Activated CD4-positive, alpha-beta T cell treated with anti-CD3 and anti-CD28 coated beads for 36 hours (primary cell): ENCODE measurements at regions of chrX and their contacts with region 1.

Region 1: DNA sequence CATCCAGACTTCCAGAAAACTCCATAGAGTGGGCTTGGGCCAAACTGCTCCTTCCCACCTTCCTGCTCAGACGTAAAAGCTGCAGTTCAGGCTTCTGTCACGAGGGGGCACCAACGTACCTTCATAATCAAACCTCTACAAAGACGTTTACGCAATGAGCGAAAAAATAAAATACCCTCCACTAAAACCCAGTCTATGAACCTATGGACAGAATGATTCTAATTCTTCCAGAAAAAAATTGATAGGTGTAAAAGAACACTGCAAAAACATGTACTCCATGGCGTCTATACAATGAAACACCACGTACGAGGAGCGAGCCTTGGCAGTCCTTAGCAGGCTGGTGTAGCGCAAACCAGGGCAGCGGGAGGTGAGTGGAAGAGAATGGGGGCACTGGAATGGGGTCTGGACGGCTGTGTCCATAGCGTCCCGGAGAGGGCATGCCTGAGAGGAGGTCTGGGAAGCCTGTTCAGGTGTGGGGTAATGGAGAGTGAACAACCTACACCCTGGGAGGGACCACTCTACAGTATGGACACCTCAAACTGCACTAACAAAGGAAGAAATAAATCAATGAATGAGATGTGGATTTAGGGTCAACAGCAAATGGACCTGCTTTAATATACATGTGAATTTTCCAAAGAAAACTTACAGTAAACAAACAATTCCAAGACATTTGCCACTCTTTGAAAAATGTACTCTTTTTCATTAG is 14.4 kb upstream of the RAB40A start:
- DNase-seq: peak; percentile 77
- ATAC-seq: peak; percentile 64
- H3K4me3 Mint-ChIP-seq: peak overlapping the region; percentile 30
- H3K27ac Mint-ChIP-seq: no peak overlapping the region
- H3K4me1 Mint-ChIP-seq: peaks cover 2% of the 10 kb centered on the region
- H3K27me3 Mint-ChIP-seq: no peaks in the 10 kb centered on the region

Region 2: DNA sequence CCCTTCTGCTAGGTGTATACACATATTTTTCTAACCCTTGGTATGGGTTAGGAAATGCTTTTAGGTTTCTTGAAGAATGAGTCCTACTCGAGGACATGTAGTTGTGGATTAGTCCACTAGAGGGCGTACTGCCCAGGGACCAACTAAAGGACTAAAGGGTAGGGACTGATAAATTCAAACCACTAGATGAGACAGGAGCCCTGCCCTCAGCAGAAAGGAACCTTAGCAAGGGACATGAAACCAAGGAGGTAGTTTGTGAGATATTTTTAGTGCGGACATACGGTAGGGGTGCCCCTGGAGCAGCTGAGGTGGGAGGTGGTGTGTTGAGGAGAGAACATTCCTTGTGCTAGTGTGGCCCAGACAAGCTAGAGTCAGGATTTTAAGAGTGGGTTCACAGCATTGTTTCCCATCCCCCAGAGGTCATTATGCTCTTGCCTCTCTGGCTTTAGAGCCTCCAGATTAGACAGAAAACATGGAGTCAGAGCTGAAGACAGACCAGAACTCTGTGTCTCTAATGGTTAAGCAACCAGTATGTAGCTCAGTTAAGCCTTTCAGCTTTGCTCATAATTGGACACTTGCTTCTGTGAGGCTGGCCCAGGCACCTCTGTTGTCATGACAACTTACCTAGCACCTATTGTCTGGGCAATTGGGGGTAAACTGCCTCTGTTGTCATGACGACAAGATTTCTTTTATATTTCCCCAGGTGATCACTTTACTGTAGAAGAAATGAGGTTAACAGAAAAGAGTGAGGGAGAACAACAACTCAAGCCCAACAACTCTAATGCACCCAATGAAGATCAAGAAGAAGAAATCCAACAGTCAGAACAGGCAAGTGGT is 178.1 kb after region 1 on chrX:
- CTCF ChIA-PET with region 1: interaction called, 5 read pairs
- POLR2A ChIA-PET with region 1: no interaction called
- intact Hi-C with region 1: loop called in 1 of 2 experiments (anchors 2 kb)
- DNase-seq: peak; percentile 66
- ATAC-seq: peak; percentile 44
- H3K4me3 Mint-ChIP-seq: no peak overlapping the region
- H3K27ac Mint-ChIP-seq: no peak overlapping the region
- H3K4me1 Mint-ChIP-seq: no peaks in the 10 kb centered on the region
- H3K27me3 Mint-ChIP-seq: no peaks in the 10 kb centered on the region

Region 3: DNA sequence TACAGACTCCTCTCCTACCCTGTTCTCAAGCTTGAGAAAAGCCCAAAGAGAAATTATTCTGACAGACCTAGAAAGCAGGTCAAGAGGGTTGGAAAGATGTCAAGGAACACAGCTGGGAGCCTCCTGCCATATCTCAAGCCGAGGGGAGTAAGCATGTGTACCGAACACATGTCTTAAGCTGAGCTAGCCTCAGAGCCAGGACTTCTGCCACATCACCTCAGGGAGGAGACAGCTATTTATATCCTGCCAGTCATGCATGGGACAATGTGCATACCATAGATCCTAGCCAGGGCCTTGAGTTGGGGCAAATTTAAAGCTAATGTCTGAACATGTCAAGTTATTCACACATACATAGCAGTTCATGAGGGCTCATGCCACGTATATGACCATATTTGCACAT is 188.8 kb after region 1 on chrX:
- CTCF ChIA-PET with region 1: no interaction called
- POLR2A ChIA-PET with region 1: no interaction called
- intact Hi-C with region 1: no loop called
- DNase-seq: no peak
- ATAC-seq: no peak
- H3K4me3 Mint-ChIP-seq: no peak overlapping the region
- H3K27ac Mint-ChIP-seq: no peak overlapping the region
- H3K4me1 Mint-ChIP-seq: no peaks in the 10 kb centered on the region
- H3K27me3 Mint-ChIP-seq: no peaks in the 10 kb centered on the region

Region 4: DNA sequence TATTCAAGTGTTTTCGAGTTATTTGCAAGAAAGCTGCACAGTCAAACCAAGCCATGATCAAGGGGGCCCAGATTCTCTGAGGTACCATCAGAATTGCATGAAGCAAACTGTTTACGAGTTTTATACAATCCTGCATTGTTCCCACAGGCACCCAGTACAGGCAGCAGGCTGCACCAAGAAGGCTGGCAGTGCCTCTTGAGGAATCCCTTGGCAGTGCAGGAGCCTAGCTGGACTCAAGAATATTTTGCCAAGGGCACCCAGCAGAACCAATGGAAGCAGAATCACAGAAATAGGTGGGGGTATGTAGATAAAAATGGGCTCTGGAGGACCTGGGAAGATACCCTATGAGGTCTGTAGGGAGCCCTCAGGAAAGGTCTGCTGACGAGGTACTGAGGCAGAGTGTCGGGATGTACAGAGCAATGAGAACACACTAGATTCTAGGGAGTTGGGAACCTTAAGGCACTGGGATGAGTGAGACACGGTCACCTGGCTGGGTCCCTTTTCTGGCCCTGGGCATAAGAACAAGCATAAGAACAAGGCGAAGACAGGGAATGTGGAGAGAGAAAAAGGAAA is 240.5 kb after region 1 on chrX:
- CTCF ChIA-PET with region 1: no interaction called
- POLR2A ChIA-PET with region 1: interaction called, 4 read pairs
- intact Hi-C with region 1: loop called in 1 of 2 experiments (anchors 1 kb)
- DNase-seq: no peak
- ATAC-seq: no peak
- H3K4me3 Mint-ChIP-seq: no peak overlapping the region
- H3K27ac Mint-ChIP-seq: no peak overlapping the region
- H3K4me1 Mint-ChIP-seq: no peaks in the 10 kb centered on the region
- H3K27me3 Mint-ChIP-seq: peaks cover 10% of the 10 kb centered on the region

Region 5: GRCh38 chrX:103817502-103817901 is 283.8 kb after region 1 on chrX:
- CTCF ChIA-PET with region 1: interaction called, 4 read pairs
- POLR2A ChIA-PET with region 1: no interaction called
- intact Hi-C with region 1: loop called (anchors 1 kb)
- DNase-seq: no peak
- ATAC-seq: peak; percentile 63
- H3K4me3 Mint-ChIP-seq: no peak overlapping the region
- H3K27ac Mint-ChIP-seq: no peak overlapping the region
- H3K4me1 Mint-ChIP-seq: no peaks in the 10 kb centered on the region
- H3K27me3 Mint-ChIP-seq: peaks cover 12% of the 10 kb centered on the region